Right cardiac atrium (tissue), 5 donors: ENCODE measurements at regions of chr7 and their contacts with region 1.

Region 1: DNA sequence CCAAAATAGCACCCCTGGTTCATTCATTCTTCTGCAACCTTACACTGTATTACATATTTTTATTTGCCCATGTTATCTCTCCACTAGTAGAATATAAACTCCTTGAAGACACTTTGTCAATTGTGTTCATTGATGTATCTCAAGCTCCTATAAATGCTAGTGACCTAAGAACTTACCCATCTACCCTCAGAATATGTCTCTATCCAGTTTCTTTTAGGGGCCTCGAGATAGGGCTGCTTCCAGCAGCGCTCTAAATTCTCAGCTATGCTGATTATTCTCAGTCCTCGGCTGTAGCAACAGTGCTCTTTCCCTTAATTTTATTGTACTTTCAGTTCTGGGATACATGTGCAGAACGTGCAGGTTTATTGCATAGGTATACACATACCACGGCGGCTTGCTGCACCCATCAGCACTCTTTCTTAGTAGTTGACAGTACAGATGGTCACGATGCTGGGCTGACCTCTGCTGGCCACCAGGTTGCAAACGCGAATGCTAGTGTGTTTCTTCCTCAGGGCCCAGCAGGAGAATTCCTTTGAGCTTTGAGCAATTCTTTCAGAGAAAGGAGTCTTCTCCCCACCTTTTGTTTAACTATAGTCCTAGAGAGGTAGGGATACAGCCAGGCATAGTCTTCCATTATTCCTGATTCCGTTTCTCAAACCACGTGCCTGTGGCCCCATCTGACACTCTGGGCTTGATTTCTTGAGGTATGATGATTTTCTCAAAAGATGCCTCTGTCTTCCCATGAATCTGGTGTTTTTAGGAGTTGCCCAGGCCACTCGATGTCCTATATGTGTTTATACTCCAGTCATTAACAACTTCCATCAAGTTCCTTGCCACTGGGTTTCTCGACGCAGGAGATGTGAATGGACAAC is 49.1 kb upstream of the CDC14C start:
- DNase-seq: peak; percentile 27 to 76 (median 67)
- ATAC-seq: peak; percentile 56 to 72
- H3K4me3 ChIP-seq: no peak overlapping the region
- H3K27ac ChIP-seq: no peak overlapping the region
- H3K4me1 ChIP-seq: no peaks in the 10 kb centered on the region
- H3K27me3 ChIP-seq: no peaks in the 10 kb centered on the region

Region 2: DNA sequence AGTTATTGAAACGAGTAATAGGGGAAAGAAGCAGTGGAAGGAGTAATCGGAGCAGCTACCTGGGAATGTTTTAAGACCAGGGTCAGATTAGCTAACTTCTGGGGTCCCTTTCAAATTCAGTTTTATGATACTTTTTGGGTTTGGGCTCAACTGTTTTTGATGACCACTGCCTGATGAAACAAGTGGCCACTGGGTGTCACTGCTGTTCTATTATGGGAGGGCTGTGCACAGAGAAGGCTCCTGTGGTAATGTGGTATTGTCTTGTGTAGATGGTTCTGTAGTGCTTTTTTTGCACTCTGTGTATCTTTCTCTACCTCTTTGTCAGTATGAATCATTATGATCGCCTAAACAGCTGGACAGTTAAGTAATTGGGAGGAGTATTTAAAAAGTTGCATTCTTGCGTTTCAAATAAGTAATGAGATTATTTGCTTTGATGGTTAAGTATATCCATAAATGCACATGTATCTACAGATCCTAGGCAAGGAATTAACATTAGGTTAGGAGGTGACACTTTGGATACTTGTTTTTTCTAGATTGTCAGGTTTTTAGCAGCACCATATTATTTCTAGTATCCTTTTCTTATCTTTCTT is 575.6 kb before region 1 on chr7:
- intact Hi-C with region 1: loop called in 3 of 4 experiments (anchors 10 kb)
- DNase-seq: peak in 2 of 3 donors; percentile 42 to 70
- ATAC-seq: peak; percentile 69 to 73
- H3K4me3 ChIP-seq: no peak overlapping the region
- H3K27ac ChIP-seq: no peak overlapping the region
- H3K4me1 ChIP-seq: peaks cover 2% of the 10 kb centered on the region
- H3K27me3 ChIP-seq: no peaks in the 10 kb centered on the region

Region 3: GRCh38 chr7:48337012-48337621 is 538.2 kb before region 1 on chr7:
- intact Hi-C with region 1: loop called in 2 of 4 experiments (anchors 10 kb)
- DNase-seq: no peak
- ATAC-seq: no peak
- H3K4me3 ChIP-seq: no peak overlapping the region
- H3K27ac ChIP-seq: no peak overlapping the region
- H3K4me1 ChIP-seq: no peaks in the 10 kb centered on the region
- H3K27me3 ChIP-seq: no peaks in the 10 kb centered on the region

Region 4: DNA sequence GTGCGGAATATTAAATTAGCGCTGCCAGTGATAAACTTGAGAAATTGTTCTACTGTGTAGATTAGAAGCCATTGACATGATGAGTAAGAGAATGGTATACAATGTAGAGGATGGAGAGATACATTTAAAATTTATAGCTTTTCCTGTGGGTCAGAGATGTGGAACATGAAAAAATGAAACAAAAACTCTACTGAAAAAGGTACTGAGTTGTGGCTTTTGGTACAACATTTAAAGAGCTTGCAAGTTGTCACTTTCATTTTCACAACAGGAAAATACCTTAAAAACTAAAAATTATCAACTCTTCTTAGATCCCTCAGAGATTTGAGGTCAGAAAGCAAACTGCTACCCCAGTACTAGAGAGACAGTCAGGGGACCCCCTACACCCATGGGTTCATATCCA is 299.8 kb before region 1 on chr7:
- intact Hi-C with region 1: no loop called
- DNase-seq: no peak
- ATAC-seq: no peak
- H3K4me3 ChIP-seq: no peak overlapping the region
- H3K27ac ChIP-seq: no peak overlapping the region
- H3K4me1 ChIP-seq: no peaks in the 10 kb centered on the region
- H3K27me3 ChIP-seq: no peaks in the 10 kb centered on the region

Region 5: GRCh38 chr7:48760528-48761265 is 114.6 kb before region 1 on chr7:
- intact Hi-C with region 1: no loop called
- DNase-seq: no peak
- ATAC-seq: no peak
- H3K4me3 ChIP-seq: no peak overlapping the region
- H3K27ac ChIP-seq: no peak overlapping the region
- H3K4me1 ChIP-seq: no peaks in the 10 kb centered on the region
- H3K27me3 ChIP-seq: no peaks in the 10 kb centered on the region